CD8-positive, alpha-beta T cell (primary cell): ENCODE measurements at regions of chr11 and their contacts with region 1.

Region 1: GRCh38 chr11:12043959-12044819 is 35.8 kb upstream of the DKK3 start:
- DNase-seq: peak; percentile 22 to 79 (median 65)
- ATAC-seq: peak; percentile 77
- H3K4me3 ChIP-seq: no peak overlapping the region
- H3K4me3 Mint-ChIP-seq: no peak overlapping the region
- H3K27ac ChIP-seq: no peak overlapping the region
- H3K27ac Mint-ChIP-seq: no peak overlapping the region
- H3K4me1 ChIP-seq: no peaks in the 10 kb centered on the region
- H3K4me1 Mint-ChIP-seq: peaks cover 3% of the 10 kb centered on the region
- H3K27me3 ChIP-seq: no peaks in the 10 kb centered on the region
- H3K27me3 Mint-ChIP-seq: peaks cover 3% of the 10 kb centered on the region
- CTCF ChIP-seq: peak; percentile 88

Region 2: DNA sequence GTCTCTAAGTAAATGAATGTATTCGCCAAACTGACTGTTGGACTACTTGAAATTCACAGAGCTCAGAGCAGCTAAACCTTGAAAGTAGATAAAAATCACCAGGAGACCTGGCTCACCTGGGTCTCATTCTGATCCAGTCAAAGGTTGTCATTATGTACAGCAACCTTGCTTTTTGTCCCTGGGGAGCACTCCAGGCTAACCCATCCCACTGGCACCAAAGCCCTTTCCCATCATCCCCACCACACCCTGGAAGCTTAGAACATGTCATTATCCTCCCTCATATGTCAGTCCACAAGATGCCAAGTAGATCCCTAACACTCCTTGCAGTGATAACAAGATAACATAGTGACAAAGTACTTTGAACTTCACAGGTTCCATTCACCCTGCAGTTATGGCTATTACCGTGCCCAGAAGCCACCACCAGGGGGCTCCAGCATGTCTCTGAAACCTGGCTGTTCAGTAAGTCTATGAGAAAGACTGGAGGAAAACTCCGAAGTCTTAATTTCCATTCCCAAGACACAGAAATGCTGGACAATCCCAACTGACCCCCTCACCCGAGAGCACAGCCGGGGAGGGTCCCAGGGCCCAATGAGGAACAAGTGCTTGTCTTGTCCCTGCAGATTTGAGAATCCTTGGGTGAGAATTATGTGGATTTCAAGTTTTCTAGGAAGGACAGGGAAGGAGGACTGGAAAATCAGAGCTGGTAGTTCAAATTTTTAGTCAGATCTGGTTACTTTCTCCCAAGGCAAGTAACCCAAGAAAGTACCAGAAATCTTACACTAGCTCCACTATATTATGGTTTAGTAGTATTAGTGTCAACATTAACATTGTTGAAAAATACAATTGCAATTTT is 245.4 kb before region 1 on chr11:
- CTCF ChIA-PET with region 1: interaction called, 33 read pairs
- POLR2A ChIA-PET with region 1: no interaction called
- intact Hi-C with region 1: loop called (anchors 2 kb)
- DNase-seq: peak; percentile 44 to 90 (median 77)
- ATAC-seq: peak; percentile 93
- H3K4me3 ChIP-seq: no peak overlapping the region
- H3K4me3 Mint-ChIP-seq: no peak overlapping the region
- H3K27ac ChIP-seq: no peak overlapping the region
- H3K27ac Mint-ChIP-seq: no peak overlapping the region
- H3K4me1 ChIP-seq: no peaks in the 10 kb centered on the region
- H3K4me1 Mint-ChIP-seq: no peaks in the 10 kb centered on the region
- H3K27me3 ChIP-seq: no peaks in the 10 kb centered on the region
- H3K27me3 Mint-ChIP-seq: peaks cover 28% of the 10 kb centered on the region
- CTCF ChIP-seq: peak; percentile 96

Region 3: GRCh38 chr11:12066799-12067508 is 22.8 kb after region 1 on chr11:
- CTCF ChIA-PET with region 1: interaction called, 34 read pairs
- POLR2A ChIA-PET with region 1: no interaction called
- intact Hi-C with region 1: no loop called
- DNase-seq: no peak
- ATAC-seq: no peak
- H3K4me3 ChIP-seq: no peak overlapping the region
- H3K4me3 Mint-ChIP-seq: no peak overlapping the region
- H3K27ac ChIP-seq: no peak overlapping the region
- H3K27ac Mint-ChIP-seq: no peak overlapping the region
- H3K4me1 ChIP-seq: no peaks in the 10 kb centered on the region
- H3K4me1 Mint-ChIP-seq: peaks cover 2% of the 10 kb centered on the region
- H3K27me3 ChIP-seq: no peaks in the 10 kb centered on the region
- H3K27me3 Mint-ChIP-seq: no peaks in the 10 kb centered on the region
- CTCF ChIP-seq: no peak

Region 4: DNA sequence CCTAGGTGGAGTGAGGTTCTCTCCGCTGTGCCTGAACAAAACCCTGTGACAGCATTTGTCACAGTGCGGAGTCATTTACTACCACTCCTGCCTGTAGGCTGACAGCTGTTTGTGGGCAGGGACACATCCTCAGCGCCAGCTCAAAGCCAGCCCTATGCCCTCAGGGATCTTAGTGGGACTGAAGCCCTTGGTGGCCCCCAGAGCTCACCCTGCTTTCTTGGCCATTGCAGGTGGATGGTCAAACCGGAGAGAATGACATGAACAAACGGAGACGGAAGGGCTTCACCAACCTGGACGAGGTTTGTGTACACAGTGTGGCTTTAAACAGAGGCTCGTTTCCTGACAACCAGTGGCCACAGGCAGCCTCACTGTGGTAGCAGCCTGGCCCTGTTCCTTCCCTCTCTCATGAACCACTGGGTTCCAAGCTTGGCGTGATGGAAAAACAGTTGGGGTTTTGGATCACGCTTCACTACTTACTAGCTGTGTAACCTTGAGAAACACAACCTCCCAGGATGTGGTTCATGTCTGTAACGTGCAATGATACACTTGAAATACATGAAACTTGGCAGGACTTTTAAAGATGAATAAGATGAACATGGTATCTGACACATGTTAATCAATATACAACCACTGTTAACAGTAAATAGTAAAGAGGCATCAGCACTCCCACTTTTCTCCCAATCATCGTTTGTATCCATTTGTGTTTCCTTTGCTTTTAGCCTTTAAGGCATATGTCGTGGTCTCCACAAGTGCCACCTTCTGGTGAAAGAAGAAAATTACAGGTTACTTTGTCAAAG is 192.0 kb after region 1 on chr11:
- CTCF ChIA-PET with region 1: interaction called, 122 read pairs
- POLR2A ChIA-PET with region 1: interaction called, 3 read pairs
- intact Hi-C with region 1: loop called (anchors 1 kb)
- DNase-seq: peak in 7 of 9 experiments; percentile 25 to 83 (median 60)
- ATAC-seq: peak; percentile 80
- H3K4me3 ChIP-seq: peak overlapping the region in 1 of 2 experiments; percentile 18
- H3K4me3 Mint-ChIP-seq: peak overlapping the region; percentile 49
- H3K27ac ChIP-seq: peak overlapping the region; percentile 38 to 69
- H3K27ac Mint-ChIP-seq: peak overlapping the region; percentile 92
- H3K4me1 ChIP-seq: peaks cover 14% of the 10 kb centered on the region
- H3K4me1 Mint-ChIP-seq: peaks cover 18% of the 10 kb centered on the region
- H3K27me3 ChIP-seq: no peaks in the 10 kb centered on the region
- H3K27me3 Mint-ChIP-seq: no peaks in the 10 kb centered on the region
- CTCF ChIP-seq: peak; percentile 74

Region 5: GRCh38 chr11:12281571-12282478 is 237.6 kb after region 1 on chr11:
- CTCF ChIA-PET with region 1: interaction called, 375 read pairs
- POLR2A ChIA-PET with region 1: interaction called, 3 read pairs
- intact Hi-C with region 1: loop called (anchors 1 kb)
- DNase-seq: peak; percentile 53 to 87 (median 81)
- ATAC-seq: peak; percentile 64
- H3K4me3 ChIP-seq: no peak overlapping the region
- H3K4me3 Mint-ChIP-seq: no peak overlapping the region
- H3K27ac ChIP-seq: no peak overlapping the region
- H3K27ac Mint-ChIP-seq: no peak overlapping the region
- H3K4me1 ChIP-seq: no peaks in the 10 kb centered on the region
- H3K4me1 Mint-ChIP-seq: no peaks in the 10 kb centered on the region
- H3K27me3 ChIP-seq: no peaks in the 10 kb centered on the region
- H3K27me3 Mint-ChIP-seq: no peaks in the 10 kb centered on the region
- CTCF ChIP-seq: peak; percentile 92